ENCODE measurements at regions of chr19 and their contacts with region 1.

Region 1: GRCh38 chr19:46564701-46565100 is 36.4 kb upstream of the CALM3 start:
- DNase-seq: no peak
- H3K4me3 ChIP-seq: no peak overlapping the region
- H3K4me3 Mint-ChIP-seq: no peak overlapping the region
- H3K27ac ChIP-seq: no peak overlapping the region
- H3K27ac Mint-ChIP-seq: no peak overlapping the region
- H3K4me1 ChIP-seq: peaks cover 0 to 4% of the 10 kb centered on the region in 2 donors
- H3K4me1 Mint-ChIP-seq: peaks cover 9% of the 10 kb centered on the region
- H3K27me3 ChIP-seq: no peaks in the 10 kb centered on the region
- H3K27me3 Mint-ChIP-seq: peaks cover 0 to 7% (median 4%) of the 10 kb centered on the region in 3 donors
- CTCF ChIP-seq: no peak

Region 2: GRCh38 chr19:46520616-46521015 is 44.1 kb before region 1 on chr19:
- intact Hi-C with region 1: loop called in 1 of 2 experiments (anchors 5 kb)
- DNase-seq: no peak
- H3K4me3 ChIP-seq: no peak overlapping the region
- H3K4me3 Mint-ChIP-seq: no peak overlapping the region
- H3K27ac ChIP-seq: no peak overlapping the region
- H3K27ac Mint-ChIP-seq: peak overlapping the region in 1 of 7 donors; percentile 40
- H3K4me1 ChIP-seq: peaks cover 11 to 19% of the 10 kb centered on the region in 2 donors
- H3K4me1 Mint-ChIP-seq: peaks cover 20% of the 10 kb centered on the region
- H3K27me3 ChIP-seq: no peaks in the 10 kb centered on the region
- H3K27me3 Mint-ChIP-seq: peaks cover 2 to 11% (median 5%) of the 10 kb centered on the region in 3 donors
- CTCF ChIP-seq: no peak

Region 3: GRCh38 chr19:46766569-46767317 is 202.0 kb after region 1 on chr19:
- intact Hi-C with region 1: no loop called
- DNase-seq: peak; percentile 39 to 63 (median 53)
- H3K4me3 ChIP-seq: no peak overlapping the region
- H3K4me3 Mint-ChIP-seq: no peak overlapping the region
- H3K27ac ChIP-seq: no peak overlapping the region
- H3K27ac Mint-ChIP-seq: peak overlapping the region in 1 of 7 donors; percentile 1
- H3K4me1 ChIP-seq: peaks cover 0 to 2% of the 10 kb centered on the region in 2 donors
- H3K4me1 Mint-ChIP-seq: peaks cover 12% of the 10 kb centered on the region
- H3K27me3 ChIP-seq: no peaks in the 10 kb centered on the region
- H3K27me3 Mint-ChIP-seq: peaks cover 0 to 2% (median 1%) of the 10 kb centered on the region in 3 donors
- CTCF ChIP-seq: peak; percentile 87

Region 4: DNA sequence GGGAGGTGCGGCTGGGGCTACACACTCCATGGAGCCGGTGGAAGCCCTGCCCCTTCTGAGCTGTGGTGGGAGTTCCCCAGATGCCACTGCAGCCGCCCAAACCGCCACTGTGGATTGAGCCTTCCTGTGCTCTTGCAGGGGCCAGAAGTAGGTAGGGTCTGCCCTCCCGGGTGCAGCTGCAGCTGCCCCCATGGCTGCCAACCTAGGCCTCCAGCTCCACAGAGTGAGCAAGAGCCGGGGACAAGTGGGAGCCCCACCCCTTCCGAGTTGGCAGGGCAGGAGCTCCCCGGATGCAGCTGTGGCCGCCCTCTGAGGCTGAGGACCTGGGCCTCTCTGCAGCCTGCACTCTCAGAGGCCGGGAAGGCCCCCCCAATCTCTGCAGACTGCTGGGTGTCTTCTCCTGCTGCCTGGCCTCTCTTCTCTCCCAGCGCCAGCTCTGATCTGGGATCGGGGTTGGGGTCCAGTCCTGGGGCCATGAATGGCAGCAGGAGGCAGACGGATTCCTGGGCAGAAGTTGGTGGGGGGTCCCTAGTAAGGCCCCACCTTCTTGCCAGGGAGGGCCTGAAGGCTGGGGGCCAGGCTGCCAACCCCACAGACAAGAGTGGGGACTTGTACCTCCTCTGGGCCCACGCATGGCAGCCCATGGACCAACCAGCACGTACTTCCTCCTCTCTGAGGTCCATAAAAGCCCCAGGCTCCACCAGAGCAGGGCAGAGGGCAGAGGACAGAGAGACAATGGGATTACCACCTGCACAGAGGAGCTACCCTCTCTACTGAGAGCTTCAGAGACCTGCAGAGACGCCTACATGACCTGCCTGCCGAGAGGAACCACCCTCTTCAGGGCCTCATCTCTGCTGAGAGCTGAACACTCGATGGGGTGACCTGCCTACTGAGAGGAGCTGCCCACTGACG is 257.1 kb after region 1 on chr19:
- intact Hi-C with region 1: no loop called
- DNase-seq: peak in 2 of 3 donors; percentile 24 to 39
- H3K4me3 ChIP-seq: peak overlapping the region in 1 of 3 experiments; percentile 23
- H3K4me3 Mint-ChIP-seq: peak overlapping the region; percentile 55 to 57
- H3K27ac ChIP-seq: peak overlapping the region; percentile 61 to 74
- H3K27ac Mint-ChIP-seq: peak overlapping the region; percentile 80 to 93 (median 89)
- H3K4me1 ChIP-seq: peaks cover 55 to 62% of the 10 kb centered on the region in 2 donors
- H3K4me1 Mint-ChIP-seq: peaks cover 54% of the 10 kb centered on the region
- H3K27me3 ChIP-seq: no peaks in the 10 kb centered on the region
- H3K27me3 Mint-ChIP-seq: peaks cover 0 to 10% (median 4%) of the 10 kb centered on the region in 3 donors
- CTCF ChIP-seq: no peak